Astrocyte of the cerebellum (primary cell): ENCODE measurements at regions of chr15 and their contacts with region 1.

Region 1: GRCh38 chr15:83099290-83099689 is 8.2 kb upstream of the TM6SF1 start:
- DNase-seq: no peak
- H3K4me3 ChIP-seq: no peak overlapping the region
- CTCF ChIP-seq: no peak

Region 2: DNA sequence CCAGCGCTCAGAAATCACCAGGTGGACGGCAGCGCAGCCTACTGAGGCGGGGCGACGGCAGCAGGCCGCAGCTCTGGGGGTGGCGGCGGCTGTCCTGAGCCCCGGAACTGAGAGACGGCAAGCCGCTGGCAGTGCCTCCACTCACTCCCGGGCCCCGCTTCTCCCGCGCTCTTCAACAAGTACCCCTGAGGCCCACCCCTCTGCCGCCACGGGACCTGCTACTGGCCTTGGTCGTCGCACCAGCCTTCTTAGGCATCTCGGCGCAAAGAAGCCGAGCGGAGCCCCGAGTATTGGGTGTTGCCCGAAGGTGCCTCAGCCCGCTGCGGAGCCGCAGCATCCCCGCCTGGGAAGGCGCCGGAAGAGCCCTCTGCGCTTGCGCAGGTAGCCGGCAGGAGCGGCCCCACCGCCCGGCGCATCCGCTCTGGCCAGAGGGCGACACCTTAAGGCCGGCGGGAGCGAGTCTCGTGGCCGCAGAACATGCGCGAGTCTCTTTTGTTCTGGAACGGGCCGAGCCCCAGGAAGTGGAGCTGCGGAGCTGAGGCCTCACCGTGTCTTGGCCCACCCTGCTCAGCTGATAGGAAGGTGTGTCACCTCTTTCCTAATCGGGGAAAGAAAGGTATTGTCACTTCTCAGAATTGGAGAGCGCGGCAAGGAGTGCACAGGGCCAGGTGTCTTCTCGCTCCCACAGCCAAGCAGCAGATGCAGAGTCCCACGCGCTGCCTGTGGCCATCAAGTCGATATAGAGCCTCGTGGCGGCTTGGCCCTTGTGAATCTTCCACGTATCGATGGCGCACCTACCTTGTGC is 87.8 kb before region 1 on chr15 and contains the start of gene C15orf40:
- in situ Hi-C with region 1: loop called (anchors 5 kb)
- DNase-seq: peak; percentile 73
- H3K4me3 ChIP-seq: peak within 1 kb of the TSS; percentile 70
- CTCF ChIP-seq: peak; percentile 74

Region 3: GRCh38 chr15:83153288-83153687 is 54.0 kb after region 1 on chr15:
- in situ Hi-C with region 1: no loop called
- DNase-seq: no peak
- H3K4me3 ChIP-seq: no peak overlapping the region
- CTCF ChIP-seq: no peak

Region 4: GRCh38 chr15:83164111-83164770 is 65.0 kb after region 1 on chr15:
- in situ Hi-C with region 1: no loop called
- DNase-seq: no peak
- H3K4me3 ChIP-seq: no peak overlapping the region
- CTCF ChIP-seq: no peak